K562 (cell line): ENCODE measurements at regions of chr14 and their contacts with region 1.

Region 1: GRCh38 chr14:23483236-23483854 is 13.8 kb downstream of the NGDN start:
- DNase-seq: peak; percentile 34 to 50 (median 45)
- ATAC-seq: peak; percentile 94
- H3K4me3 ChIP-seq: no peak overlapping the region
- H3K27ac ChIP-seq: no peak overlapping the region
- H3K4me1 ChIP-seq: no peaks in the 10 kb centered on the region
- H3K27me3 ChIP-seq: no peaks in the 10 kb centered on the region
- CTCF ChIP-seq: peak; percentile 39 to 65 (median 58); a peak in 5 of 6 replicates
- EP300 ChIP-seq: no peak
- POLR2A ChIP-seq: no peak
- RAD21 ChIP-seq: peak; percentile 13 to 57; a peak in 2 of 4 replicates

Region 2: DNA sequence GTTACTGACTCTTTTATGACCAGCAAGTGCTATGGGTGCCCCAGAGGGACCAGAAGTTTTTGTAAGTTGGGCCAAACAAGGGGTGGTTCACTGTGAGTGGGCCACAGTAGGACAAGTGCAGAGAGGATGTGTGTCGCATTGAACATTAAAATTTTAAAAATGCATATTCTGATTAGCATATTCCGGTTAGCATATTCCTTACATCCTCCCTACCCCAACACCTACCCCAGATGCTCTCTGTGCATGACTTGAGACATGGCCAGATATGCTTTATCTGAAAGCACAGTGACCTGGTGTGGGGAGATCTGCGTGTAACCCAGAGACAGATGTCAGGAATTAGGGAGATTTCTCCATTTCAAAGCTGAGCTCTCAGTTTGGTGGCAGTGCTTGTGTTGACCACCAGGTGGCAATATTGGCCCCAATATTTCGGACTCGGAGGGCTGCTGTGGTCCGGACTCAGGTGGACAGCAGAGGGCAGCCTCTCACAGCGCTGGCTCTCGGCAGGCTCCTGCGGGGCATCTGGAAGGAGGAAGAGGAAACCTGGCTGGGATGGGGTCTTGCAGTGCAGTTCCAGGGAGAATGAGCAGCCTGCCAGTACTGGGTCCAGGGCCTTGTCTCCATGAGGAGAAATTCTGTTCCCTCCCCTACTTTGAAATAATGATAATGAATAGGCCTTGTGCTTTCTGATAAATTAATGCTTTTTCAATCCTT is 362.6 kb before region 1 on chr14:
- CTCF ChIA-PET with region 1: no interaction called
- POLR2A ChIA-PET with region 1: no interaction called
- in situ Hi-C with region 1: no loop called
- intact Hi-C with region 1: no loop called
- DNase-seq: peak; percentile 87 to 94 (median 88)
- ATAC-seq: peak; percentile 92
- H3K4me3 ChIP-seq: no peak overlapping the region
- H3K27ac ChIP-seq: no peak overlapping the region
- H3K4me1 ChIP-seq: peaks cover 51 to 58% of the 10 kb centered on the region in 2 experiments
- H3K27me3 ChIP-seq: no peaks in the 10 kb centered on the region
- CTCF ChIP-seq: peak; percentile 100
- EP300 ChIP-seq: peak; percentile 71
- POLR2A ChIP-seq: no peak
- RAD21 ChIP-seq: peak; percentile 100

Region 3: GRCh38 chr14:23430788-23431085 is 52.6 kb before region 1 on chr14:
- CTCF ChIA-PET with region 1: no interaction called
- POLR2A ChIA-PET with region 1: no interaction called
- in situ Hi-C with region 1: no loop called
- intact Hi-C with region 1: loop called (anchors 5 kb)
- DNase-seq: no peak
- ATAC-seq: no peak
- H3K4me3 ChIP-seq: no peak overlapping the region
- H3K27ac ChIP-seq: no peak overlapping the region
- H3K4me1 ChIP-seq: peaks cover 0 to under 1% of the 10 kb centered on the region in 2 experiments; a peak in 1 of 5 replicates
- H3K27me3 ChIP-seq: peaks cover 0 to 42% of the 10 kb centered on the region in 2 experiments; a peak in 3 of 5 replicates
- CTCF ChIP-seq: no peak
- EP300 ChIP-seq: no peak
- POLR2A ChIP-seq: no peak
- RAD21 ChIP-seq: no peak

Region 4: DNA sequence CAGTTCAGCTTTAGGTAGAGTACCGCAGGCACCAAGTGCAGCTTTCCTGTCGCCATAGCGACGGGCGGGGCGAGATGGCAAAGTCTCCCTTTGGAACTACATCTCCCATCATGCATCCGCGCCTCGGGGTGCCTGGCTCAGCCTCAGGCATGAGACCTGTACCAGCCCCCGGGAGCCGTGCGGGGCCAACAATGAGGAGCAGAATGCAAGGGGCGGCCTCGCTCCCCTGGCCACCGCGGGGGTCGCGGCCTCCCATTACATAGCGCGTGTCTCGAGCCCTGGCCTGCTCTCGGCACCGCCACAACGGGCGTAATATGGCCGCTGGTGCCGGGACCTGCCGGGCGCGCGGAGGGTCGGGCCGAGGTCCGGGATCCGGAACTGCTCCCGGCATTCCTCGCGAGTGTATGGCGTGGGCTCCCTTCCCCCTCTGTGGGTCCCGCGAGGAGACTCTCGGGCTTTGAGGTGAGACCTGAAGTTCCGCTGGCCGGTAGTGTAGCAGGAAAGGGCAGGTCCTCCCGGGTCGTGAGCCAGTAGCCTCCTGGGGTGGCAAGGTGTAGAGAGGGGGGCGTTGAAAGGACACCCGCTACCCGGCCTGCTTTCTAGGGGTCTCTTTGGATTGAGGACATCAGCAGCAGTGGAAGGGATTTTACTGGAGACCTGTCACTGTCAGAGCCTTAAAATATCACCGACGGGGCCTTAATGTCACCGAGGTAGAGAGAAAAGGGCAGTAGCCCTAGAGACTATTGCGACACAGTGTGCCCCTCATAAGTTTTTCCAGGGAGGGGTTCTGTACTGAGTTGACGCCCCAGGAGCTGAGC is 72.7 kb after region 1 on chr14 and contains the start of gene THTPA:
- CTCF ChIA-PET with region 1: interaction called, 22 read pairs
- POLR2A ChIA-PET with region 1: interaction called, 3 read pairs
- in situ Hi-C with region 1: loop called (anchors 5 kb)
- intact Hi-C with region 1: loop called (anchors 1 kb)
- DNase-seq: peak; percentile 80 to 90 (median 85)
- ATAC-seq: peak; percentile 89
- H3K4me3 ChIP-seq: peak within 1 kb of the TSS; percentile 68
- H3K27ac ChIP-seq: peak within 1 kb of the TSS; percentile 76
- H3K4me1 ChIP-seq: peaks cover 7 to 21% of the 10 kb centered on the region in 2 experiments; a peak in 3 of 5 replicates
- H3K27me3 ChIP-seq: no peaks in the 10 kb centered on the region
- CTCF ChIP-seq: no peak
- EP300 ChIP-seq: no peak
- POLR2A ChIP-seq: peak; percentile 82
- RAD21 ChIP-seq: no peak
- polyA plus RNA-seq, gene THTPA: 6.4 to 6.5 TPM